CD4-positive, alpha-beta memory T cell (primary cell): ENCODE measurements at regions of chr5 and their contacts with region 1.

Region 1: GRCh38 chr5:139293504-139294373 is at the start of gene MATR3:
- DNase-seq: peak; percentile 91 to 94 (median 93)
- H3K4me3 ChIP-seq: peak within 1 kb of the TSS; percentile 86 to 87
- H3K4me3 Mint-ChIP-seq: peak within 1 kb of the TSS; percentile 97 to 99 (median 98)
- H3K27ac ChIP-seq: peak within 1 kb of the TSS; percentile 100
- H3K27ac Mint-ChIP-seq: peak within 1 kb of the TSS; percentile 97 to 99 (median 99)
- H3K4me1 ChIP-seq: peaks cover 48% of the 10 kb centered on the region
- H3K4me1 Mint-ChIP-seq: peaks cover 30 to 54% (median 38%) of the 10 kb centered on the region in 4 donors
- H3K27me3 ChIP-seq: no peaks in the 10 kb centered on the region
- H3K27me3 Mint-ChIP-seq: no peaks in the 10 kb centered on the region
- total RNA-seq, gene MATR3: 228 to 255 TPM

Region 2: GRCh38 chr5:138542956-138543729 is 750.6 kb before region 1 on chr5 and contains the start of gene ETF1:
- CTCF ChIA-PET with region 1: no interaction called
- POLR2A ChIA-PET with region 1: interaction called, 19 read pairs
- intact Hi-C with region 1: loop called (anchors 1 kb)
- DNase-seq: peak; percentile 99 to 100 (median 100)
- H3K4me3 ChIP-seq: peak within 1 kb of the TSS; percentile 80 to 92
- H3K4me3 Mint-ChIP-seq: peak within 1 kb of the TSS; percentile 95 to 100 (median 100)
- H3K27ac ChIP-seq: peak within 1 kb of the TSS; percentile 100
- H3K27ac Mint-ChIP-seq: peak within 1 kb of the TSS; percentile 99 to 100 (median 100)
- H3K4me1 ChIP-seq: peaks cover 73% of the 10 kb centered on the region
- H3K4me1 Mint-ChIP-seq: peaks cover 48 to 87% (median 71%) of the 10 kb centered on the region in 4 donors
- H3K27me3 ChIP-seq: no peaks in the 10 kb centered on the region
- H3K27me3 Mint-ChIP-seq: no peaks in the 10 kb centered on the region
- total RNA-seq, gene ETF1: 42.6 to 46.5 TPM

Region 3: DNA sequence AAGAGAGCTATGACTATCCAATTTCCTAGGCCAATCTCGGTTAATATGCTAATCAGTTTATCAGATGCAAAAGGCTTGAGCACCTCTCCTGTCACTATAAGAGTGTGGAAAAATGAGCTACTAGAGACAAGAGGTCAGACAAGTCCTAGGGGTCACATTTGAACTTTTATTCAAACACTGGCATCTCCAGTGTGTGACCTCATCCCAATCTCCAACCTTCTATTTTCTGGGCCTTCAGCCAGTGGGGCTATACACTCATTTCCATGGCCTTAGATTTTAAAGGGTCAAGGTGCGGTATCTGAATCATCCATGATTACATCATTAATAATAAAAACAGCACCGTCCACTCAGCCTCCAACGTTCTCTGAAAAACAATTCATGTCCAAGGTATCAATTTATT is 279.0 kb before region 1 on chr5:
- CTCF ChIA-PET with region 1: no interaction called
- POLR2A ChIA-PET with region 1: no interaction called
- intact Hi-C with region 1: no loop called
- DNase-seq: no peak
- H3K4me3 ChIP-seq: no peak overlapping the region
- H3K4me3 Mint-ChIP-seq: no peak overlapping the region
- H3K27ac ChIP-seq: no peak overlapping the region
- H3K27ac Mint-ChIP-seq: no peak overlapping the region
- H3K4me1 ChIP-seq: no peaks in the 10 kb centered on the region
- H3K4me1 Mint-ChIP-seq: peaks cover 0 to 6% (median under 1%) of the 10 kb centered on the region in 4 donors
- H3K27me3 ChIP-seq: no peaks in the 10 kb centered on the region
- H3K27me3 Mint-ChIP-seq: no peaks in the 10 kb centered on the region

Region 4: GRCh38 chr5:139273572-139274289 is 20.0 kb before region 1 on chr5:
- CTCF ChIA-PET with region 1: interaction called, 15 read pairs
- POLR2A ChIA-PET with region 1: interaction called, 90 read pairs
- intact Hi-C with region 1: loop called (anchors 1 kb)
- DNase-seq: peak; percentile 82 to 91 (median 86)
- H3K4me3 ChIP-seq: peak overlapping the region; percentile 14 to 65
- H3K4me3 Mint-ChIP-seq: peak overlapping the region; percentile 85 to 91 (median 87)
- H3K27ac ChIP-seq: peak overlapping the region; percentile 58
- H3K27ac Mint-ChIP-seq: peak overlapping the region; percentile 74 to 94 (median 90)
- H3K4me1 ChIP-seq: peaks cover 55% of the 10 kb centered on the region
- H3K4me1 Mint-ChIP-seq: peaks cover 29 to 55% (median 38%) of the 10 kb centered on the region in 4 donors
- H3K27me3 ChIP-seq: no peaks in the 10 kb centered on the region
- H3K27me3 Mint-ChIP-seq: no peaks in the 10 kb centered on the region

Region 5: GRCh38 chr5:139335811-139336210 is 42.1 kb after region 1 on chr5:
- CTCF ChIA-PET with region 1: interaction called, 15 read pairs
- POLR2A ChIA-PET with region 1: interaction called, 149 read pairs
- intact Hi-C with region 1: loop called (anchors 1 kb)
- DNase-seq: peak in 1 of 5 donors; percentile 16
- H3K4me3 ChIP-seq: no peak overlapping the region
- H3K4me3 Mint-ChIP-seq: no peak overlapping the region
- H3K27ac ChIP-seq: no peak overlapping the region
- H3K27ac Mint-ChIP-seq: peak overlapping the region in 6 of 7 donors; percentile 11 to 87 (median 68)
- H3K4me1 ChIP-seq: peaks cover 6% of the 10 kb centered on the region
- H3K4me1 Mint-ChIP-seq: peaks cover 6 to 21% (median 12%) of the 10 kb centered on the region in 4 donors
- H3K27me3 ChIP-seq: no peaks in the 10 kb centered on the region
- H3K27me3 Mint-ChIP-seq: no peaks in the 10 kb centered on the region

Region 6: GRCh38 chr5:139403787-139404483 is 110.2 kb after region 1 on chr5 and contains the start of gene SPATA24:
- CTCF ChIA-PET with region 1: no interaction called
- POLR2A ChIA-PET with region 1: interaction called, 15 read pairs
- intact Hi-C with region 1: loop called (anchors 1 kb)
- DNase-seq: peak; percentile 97 to 98 (median 98)
- H3K4me3 ChIP-seq: peak within 1 kb of the TSS; percentile 71 to 90
- H3K4me3 Mint-ChIP-seq: peak within 1 kb of the TSS; percentile 91 to 99 (median 94)
- H3K27ac ChIP-seq: peak within 1 kb of the TSS; percentile 85
- H3K27ac Mint-ChIP-seq: peak within 1 kb of the TSS; percentile 91 to 100 (median 99)
- H3K4me1 ChIP-seq: peaks cover 20% of the 10 kb centered on the region
- H3K4me1 Mint-ChIP-seq: peaks cover 16 to 31% (median 22%) of the 10 kb centered on the region in 4 donors
- H3K27me3 ChIP-seq: no peaks in the 10 kb centered on the region
- H3K27me3 Mint-ChIP-seq: no peaks in the 10 kb centered on the region
- total RNA-seq, gene SPATA24: 5.6 to 7.5 TPM

Region 7: GRCh38 chr5:140107312-140108083 is 813.8 kb after region 1 on chr5:
- CTCF ChIA-PET with region 1: no interaction called
- POLR2A ChIA-PET with region 1: interaction called, 5 read pairs
- intact Hi-C with region 1: loop called (anchors 5 kb)
- DNase-seq: peak; percentile 95 to 96 (median 95)
- H3K4me3 ChIP-seq: peak overlapping the region; percentile 77 to 88
- H3K4me3 Mint-ChIP-seq: peak overlapping the region; percentile 92 to 100 (median 97)
- H3K27ac ChIP-seq: peak overlapping the region; percentile 94
- H3K27ac Mint-ChIP-seq: peak overlapping the region; percentile 97 to 100 (median 99)
- H3K4me1 ChIP-seq: peaks cover 47% of the 10 kb centered on the region
- H3K4me1 Mint-ChIP-seq: peaks cover 19 to 51% (median 39%) of the 10 kb centered on the region in 4 donors
- H3K27me3 ChIP-seq: no peaks in the 10 kb centered on the region
- H3K27me3 Mint-ChIP-seq: no peaks in the 10 kb centered on the region